ENCODE measurements at regions of chr1 and their contacts with region 1.

Region 1: DNA sequence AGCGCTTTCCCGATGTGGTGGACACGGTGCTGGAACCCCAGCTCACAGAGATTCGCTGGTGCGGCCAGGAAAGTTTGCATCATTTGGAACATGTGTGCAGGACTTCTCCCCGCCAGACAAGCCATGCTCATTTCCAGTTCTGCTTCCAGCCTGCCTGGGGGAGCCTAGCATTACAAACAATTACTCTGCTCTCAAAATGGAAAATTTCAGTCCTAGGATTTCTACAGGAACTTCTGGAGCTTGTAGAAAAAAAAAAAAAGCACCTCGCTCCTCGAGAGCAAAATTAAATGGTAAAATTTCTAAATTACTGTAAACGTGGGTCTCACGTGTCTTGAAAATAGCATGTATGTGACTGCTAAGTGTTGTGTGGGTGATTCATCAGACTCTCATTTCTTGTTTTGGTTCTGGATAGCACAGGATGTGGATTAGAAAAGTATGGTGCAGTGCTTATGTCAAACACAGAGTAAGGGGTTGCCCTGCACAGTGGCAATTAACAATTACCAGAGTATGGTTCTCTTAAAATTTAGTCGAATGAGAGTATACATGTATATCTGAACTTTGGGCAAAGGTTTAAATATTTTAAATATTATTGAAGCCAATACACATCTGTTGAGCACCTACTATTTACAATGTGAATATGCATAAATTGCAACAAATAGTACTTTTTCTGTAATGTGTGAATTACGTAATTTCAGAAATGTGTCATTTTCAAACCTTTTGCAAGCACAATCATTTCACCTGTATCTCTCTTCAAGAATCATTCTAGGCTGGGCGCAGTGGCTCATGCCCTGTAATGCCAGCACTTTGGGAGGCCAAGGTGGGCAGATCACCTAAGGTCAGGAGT is 61.8 kb upstream of the PTGFRN start:
- DNase-seq: peak; percentile 62
- H3K4me3 Mint-ChIP-seq: no peak overlapping the region
- H3K27ac Mint-ChIP-seq: peak overlapping the region; percentile 51
- H3K4me1 Mint-ChIP-seq: peaks cover 37% of the 10 kb centered on the region
- H3K27me3 Mint-ChIP-seq: no peaks in the 10 kb centered on the region

Region 2: GRCh38 chr1:116411784-116412479 is 436.0 kb before region 1 on chr1:
- CTCF ChIA-PET with region 1: no interaction called
- intact Hi-C with region 1: no loop called
- DNase-seq: no peak
- H3K4me3 Mint-ChIP-seq: no peak overlapping the region
- H3K27ac Mint-ChIP-seq: no peak overlapping the region
- H3K4me1 Mint-ChIP-seq: peaks cover 25% of the 10 kb centered on the region
- H3K27me3 Mint-ChIP-seq: no peaks in the 10 kb centered on the region

Region 3: GRCh38 chr1:116763787-116764465 is 84.0 kb before region 1 on chr1:
- CTCF ChIA-PET with region 1: no interaction called
- intact Hi-C with region 1: loop called (anchors 1 kb)
- DNase-seq: peak; percentile 68
- H3K4me3 Mint-ChIP-seq: peak overlapping the region; percentile 100
- H3K27ac Mint-ChIP-seq: peak overlapping the region; percentile 100
- H3K4me1 Mint-ChIP-seq: peaks cover 87% of the 10 kb centered on the region
- H3K27me3 Mint-ChIP-seq: no peaks in the 10 kb centered on the region

Region 4: DNA sequence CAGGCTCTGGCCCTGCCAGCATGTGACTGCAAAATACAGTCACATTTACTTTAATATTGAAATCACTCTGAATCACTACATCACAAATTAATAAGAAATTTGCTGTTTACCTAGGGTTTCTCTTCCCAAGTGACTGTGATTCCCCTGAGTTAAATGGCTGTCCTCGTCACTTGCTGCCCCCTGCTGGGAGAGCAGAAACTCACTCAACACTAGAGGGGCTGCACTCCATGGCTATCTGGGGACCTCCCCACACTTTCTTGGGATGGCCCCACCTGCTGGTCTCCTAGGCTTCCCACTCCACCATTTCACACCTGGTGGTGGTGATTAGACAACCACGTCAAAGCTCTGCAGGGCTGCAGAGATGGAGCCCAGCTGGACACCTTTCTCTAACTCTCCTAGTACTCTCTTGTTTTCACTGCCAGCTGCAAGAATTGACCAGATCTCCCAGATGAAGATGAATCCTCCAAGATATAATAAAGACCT is 30.3 kb before region 1 on chr1:
- CTCF ChIA-PET with region 1: no interaction called
- intact Hi-C with region 1: loop called (anchors 1 kb)
- DNase-seq: peak; percentile 91
- H3K4me3 Mint-ChIP-seq: no peak overlapping the region
- H3K27ac Mint-ChIP-seq: peak overlapping the region; percentile 98
- H3K4me1 Mint-ChIP-seq: peaks cover 66% of the 10 kb centered on the region
- H3K27me3 Mint-ChIP-seq: no peaks in the 10 kb centered on the region

Region 5: GRCh38 chr1:116881879-116882520 is 34.1 kb after region 1 on chr1:
- CTCF ChIA-PET with region 1: no interaction called
- intact Hi-C with region 1: loop called (anchors 1 kb)
- DNase-seq: peak; percentile 77
- H3K4me3 Mint-ChIP-seq: no peak overlapping the region
- H3K27ac Mint-ChIP-seq: no peak overlapping the region
- H3K4me1 Mint-ChIP-seq: peaks cover 12% of the 10 kb centered on the region
- H3K27me3 Mint-ChIP-seq: no peaks in the 10 kb centered on the region

Region 6: DNA sequence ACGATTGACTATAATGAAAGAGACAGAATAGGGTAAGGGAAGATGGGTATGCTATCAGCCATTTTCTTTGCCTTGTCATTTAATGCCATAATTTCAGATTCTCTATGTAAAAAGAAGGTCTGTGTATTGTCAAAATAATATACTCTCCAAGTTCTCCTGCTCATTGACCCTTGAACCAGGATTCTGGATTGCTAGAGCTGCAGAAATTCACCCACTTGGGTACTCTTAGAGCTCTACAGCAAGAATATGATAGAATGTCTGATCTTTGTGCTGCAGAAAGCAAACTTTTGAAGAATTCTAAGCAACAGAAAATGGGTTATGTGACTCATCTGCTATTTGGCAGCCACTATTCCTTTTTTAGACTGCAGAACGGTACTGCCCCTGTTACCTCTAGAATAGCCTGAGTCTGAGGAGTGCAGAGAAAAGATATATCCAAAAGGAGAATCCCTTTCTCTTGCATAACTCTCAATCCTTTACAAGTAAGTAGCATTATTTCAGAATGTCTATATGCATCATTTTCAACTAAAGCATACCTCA is 679.7 kb after region 1 on chr1:
- CTCF ChIA-PET with region 1: no interaction called
- intact Hi-C with region 1: loop called (anchors 1 kb)
- DNase-seq: no peak
- H3K4me3 Mint-ChIP-seq: no peak overlapping the region
- H3K27ac Mint-ChIP-seq: no peak overlapping the region
- H3K4me1 Mint-ChIP-seq: peaks cover 25% of the 10 kb centered on the region
- H3K27me3 Mint-ChIP-seq: no peaks in the 10 kb centered on the region

Measured in activated naive CD4-positive, alpha-beta T cell treated with anti-CD3 and anti-CD28 coated beads for 36 hours (primary cell).